Left cardiac atrium (tissue), 4 donors: ENCODE measurements at regions of chrX and their contacts with region 1.

Region 1: DNA sequence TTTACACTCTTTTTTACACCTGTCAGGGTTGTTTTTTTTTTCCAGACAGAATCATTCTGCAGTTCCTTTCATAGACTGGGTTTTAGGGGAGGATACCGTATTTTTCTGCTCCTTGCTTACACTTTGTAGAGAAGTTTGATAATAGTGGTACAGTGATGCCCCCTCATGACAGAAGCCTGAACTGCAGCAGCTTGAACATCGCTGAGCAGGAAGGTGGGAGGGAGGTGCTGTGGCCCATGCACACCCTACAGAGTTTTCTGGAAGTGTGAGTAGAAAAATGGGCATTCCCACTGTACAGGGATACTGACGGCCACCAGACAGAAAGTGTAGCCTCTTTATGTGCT is 54.5 kb downstream of the RAB40A start:
- DNase-seq: peak; percentile 54
- ATAC-seq: peak; percentile 89 to 96

Region 2: GRCh38 chrX:103214870-103215424 is 249.8 kb before region 1 on chrX and contains the start of gene BEX4:
- intact Hi-C with region 1: loop called in 1 of 2 experiments (anchors 5 kb)
- DNase-seq: peak; percentile 87
- ATAC-seq: peak; percentile 98 to 100
- total RNA-seq, gene BEX4: 47.5 to 68.8 TPM

Region 3: DNA sequence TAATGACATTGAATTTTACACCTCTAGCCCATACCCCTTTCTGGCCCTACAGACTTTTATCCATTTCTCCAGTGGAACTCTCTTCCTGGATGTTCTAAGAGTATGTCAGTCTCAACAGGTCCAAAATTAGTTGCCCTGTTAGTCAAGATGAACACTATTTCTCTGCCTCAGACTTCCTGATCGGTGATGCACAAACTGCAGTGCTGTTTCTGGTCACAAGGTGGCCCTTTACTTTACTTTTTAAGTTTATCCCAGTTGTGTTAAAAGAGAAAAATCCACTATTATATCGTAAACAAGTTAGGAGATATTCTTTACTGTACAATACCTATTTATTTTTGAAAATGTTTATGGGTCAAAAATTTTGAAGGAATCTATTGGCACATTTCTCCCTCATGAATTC is 121.6 kb before region 1 on chrX:
- intact Hi-C with region 1: loop called (anchors 1 to 5 kb)
- DNase-seq: no peak
- ATAC-seq: no peak